ENCODE measurements at regions of chr16 and their contacts with region 1.

Region 1: DNA sequence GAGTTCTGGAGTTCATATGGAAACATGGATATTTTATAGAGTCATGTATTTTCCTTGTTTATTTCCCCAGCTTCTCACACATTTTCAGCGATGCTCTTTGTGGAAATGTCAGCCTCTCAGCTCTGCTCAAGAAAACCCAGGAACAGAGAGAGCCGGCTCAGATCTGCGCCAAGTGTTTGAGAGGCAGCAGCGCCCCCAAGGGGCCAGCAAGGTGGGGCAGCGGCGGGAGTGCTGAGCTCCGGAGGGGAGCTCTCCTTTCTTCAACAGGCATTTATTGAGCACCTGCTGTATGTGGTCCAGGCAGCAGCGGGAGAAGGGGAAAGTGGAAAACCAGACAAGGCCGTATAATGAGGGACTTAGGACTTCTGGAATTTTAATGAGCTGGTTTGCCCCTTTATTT is 421.1 kb upstream of the C16orf82 start:
- DNase-seq: peak; percentile 82
- ATAC-seq: peak; percentile 87
- H3K4me3 Mint-ChIP-seq: no peak overlapping the region
- H3K27ac Mint-ChIP-seq: no peak overlapping the region
- H3K4me1 Mint-ChIP-seq: peaks cover 8% of the 10 kb centered on the region
- H3K27me3 Mint-ChIP-seq: peaks cover 5% of the 10 kb centered on the region

Region 2: GRCh38 chr16:26204138-26204537 is 441.5 kb before region 1 on chr16:
- CTCF ChIA-PET with region 1: no interaction called
- POLR2A ChIA-PET with region 1: no interaction called
- intact Hi-C with region 1: loop called in 1 of 2 experiments (anchors 10 kb)
- DNase-seq: peak; percentile 42
- ATAC-seq: peak; percentile 90
- H3K4me3 Mint-ChIP-seq: no peak overlapping the region
- H3K27ac Mint-ChIP-seq: no peak overlapping the region
- H3K4me1 Mint-ChIP-seq: peaks cover 4% of the 10 kb centered on the region
- H3K27me3 Mint-ChIP-seq: peaks cover 18% of the 10 kb centered on the region

Region 3: GRCh38 chr16:26497896-26498295 is 147.7 kb before region 1 on chr16:
- CTCF ChIA-PET with region 1: interaction called, 3 read pairs
- POLR2A ChIA-PET with region 1: no interaction called
- intact Hi-C with region 1: loop called in 1 of 2 experiments (anchors 5 kb)
- DNase-seq: no peak
- ATAC-seq: no peak
- H3K4me3 Mint-ChIP-seq: no peak overlapping the region
- H3K27ac Mint-ChIP-seq: no peak overlapping the region
- H3K4me1 Mint-ChIP-seq: peaks cover 5% of the 10 kb centered on the region
- H3K27me3 Mint-ChIP-seq: peaks cover 9% of the 10 kb centered on the region

Region 4: GRCh38 chr16:26701243-26701886 is 55.8 kb after region 1 on chr16:
- CTCF ChIA-PET with region 1: no interaction called
- POLR2A ChIA-PET with region 1: no interaction called
- intact Hi-C with region 1: no loop called
- DNase-seq: no peak
- ATAC-seq: no peak
- H3K4me3 Mint-ChIP-seq: no peak overlapping the region
- H3K27ac Mint-ChIP-seq: no peak overlapping the region
- H3K4me1 Mint-ChIP-seq: no peaks in the 10 kb centered on the region
- H3K27me3 Mint-ChIP-seq: peaks cover 20% of the 10 kb centered on the region

Region 5: DNA sequence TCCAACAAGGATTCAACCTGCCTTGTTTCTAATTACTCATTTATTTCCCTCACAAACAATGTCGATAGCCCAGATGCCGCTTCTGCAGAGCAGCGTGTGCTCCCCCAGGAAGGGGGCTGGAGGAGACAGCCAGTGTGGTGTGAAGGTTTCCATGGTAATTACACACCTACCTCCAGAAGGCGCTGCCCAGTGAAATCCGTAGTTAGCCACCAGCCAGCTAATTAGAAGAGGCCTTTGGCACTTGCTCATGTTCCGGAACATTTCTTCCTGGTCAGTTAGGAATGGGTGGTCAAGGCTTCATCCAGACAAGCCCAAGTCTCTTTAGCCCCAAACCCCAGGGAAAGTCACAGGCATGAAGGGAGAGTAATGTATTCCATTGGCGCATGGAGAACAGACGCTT is 78.6 kb after region 1 on chr16:
- CTCF ChIA-PET with region 1: no interaction called
- POLR2A ChIA-PET with region 1: no interaction called
- intact Hi-C with region 1: no loop called
- DNase-seq: no peak
- ATAC-seq: no peak
- H3K4me3 Mint-ChIP-seq: no peak overlapping the region
- H3K27ac Mint-ChIP-seq: no peak overlapping the region
- H3K4me1 Mint-ChIP-seq: no peaks in the 10 kb centered on the region
- H3K27me3 Mint-ChIP-seq: peaks cover 18% of the 10 kb centered on the region

Region 6: DNA sequence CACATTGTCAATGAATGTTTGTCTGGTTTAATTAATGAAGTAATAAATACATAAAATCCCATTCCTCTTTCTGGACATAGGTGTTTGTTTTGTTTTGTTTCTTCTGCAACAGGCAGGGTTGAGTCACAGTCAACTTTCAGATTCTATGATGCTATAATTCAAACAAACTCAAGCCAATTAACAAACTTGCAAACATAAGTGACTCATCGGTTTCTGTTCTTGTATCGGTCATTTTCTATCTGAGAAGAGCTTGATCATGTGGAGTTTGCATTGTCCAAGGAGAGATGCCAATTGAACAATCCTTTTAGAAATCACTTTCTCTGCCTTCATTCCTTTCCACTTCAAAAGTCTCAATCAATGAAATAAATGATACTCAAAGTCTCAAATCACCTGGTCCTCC is 126.9 kb after region 1 on chr16:
- CTCF ChIA-PET with region 1: no interaction called
- POLR2A ChIA-PET with region 1: no interaction called
- intact Hi-C with region 1: no loop called
- DNase-seq: no peak
- ATAC-seq: peak; percentile 70
- H3K4me3 Mint-ChIP-seq: no peak overlapping the region
- H3K27ac Mint-ChIP-seq: no peak overlapping the region
- H3K4me1 Mint-ChIP-seq: peaks cover 9% of the 10 kb centered on the region
- H3K27me3 Mint-ChIP-seq: peaks cover 39% of the 10 kb centered on the region

Measured in activated CD4-positive, alpha-beta T cell treated with anti-CD3 and anti-CD28 coated beads for 36 hours (primary cell).